ENCODE measurements at regions of chr10 and their contacts with region 1.

Region 1: DNA sequence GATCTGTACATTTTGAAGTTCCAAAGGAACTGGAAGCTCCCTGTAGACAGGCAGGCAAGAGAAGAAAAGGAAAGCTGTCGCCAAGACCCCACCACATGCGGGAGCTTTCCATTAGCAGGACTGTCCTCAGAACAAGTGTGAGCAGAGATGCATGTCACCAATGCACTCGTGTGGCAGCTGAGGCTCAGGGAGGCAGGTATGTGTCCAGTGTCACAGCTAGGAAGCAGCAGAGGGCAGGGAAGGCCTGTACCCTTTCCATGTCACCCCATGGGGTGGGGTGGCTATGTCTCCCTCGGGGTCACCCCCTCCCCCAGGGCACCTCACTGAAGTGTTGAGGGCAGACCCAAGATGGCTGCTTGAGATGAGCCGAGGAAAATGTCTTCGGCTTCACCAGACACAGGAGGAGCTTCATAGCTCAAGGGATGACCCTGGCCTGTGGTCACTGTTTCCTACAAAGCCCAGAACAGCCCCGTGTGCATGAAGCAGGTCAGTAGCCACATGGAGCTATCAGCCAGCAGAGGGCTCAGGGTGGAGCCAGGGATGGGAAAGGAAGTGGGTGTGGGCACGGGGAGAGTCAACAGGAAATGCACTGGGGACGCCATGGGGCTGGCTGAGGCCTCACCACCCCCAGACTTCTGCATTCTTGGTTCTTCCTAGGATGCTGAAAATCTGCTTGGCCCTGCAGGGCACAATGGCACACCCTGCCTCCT is 96.6 kb downstream of the FAM53B start:
- DNase-seq: no peak
- H3K4me3 ChIP-seq: no peak overlapping the region
- H3K27ac ChIP-seq: peak overlapping the region; percentile 3 to 28
- H3K4me1 ChIP-seq: peaks cover 5% of the 10 kb centered on the region
- H3K27me3 ChIP-seq: no peaks in the 10 kb centered on the region
- CTCF ChIP-seq: no peak
- POLR2A ChIP-seq: no peak

Region 2: DNA sequence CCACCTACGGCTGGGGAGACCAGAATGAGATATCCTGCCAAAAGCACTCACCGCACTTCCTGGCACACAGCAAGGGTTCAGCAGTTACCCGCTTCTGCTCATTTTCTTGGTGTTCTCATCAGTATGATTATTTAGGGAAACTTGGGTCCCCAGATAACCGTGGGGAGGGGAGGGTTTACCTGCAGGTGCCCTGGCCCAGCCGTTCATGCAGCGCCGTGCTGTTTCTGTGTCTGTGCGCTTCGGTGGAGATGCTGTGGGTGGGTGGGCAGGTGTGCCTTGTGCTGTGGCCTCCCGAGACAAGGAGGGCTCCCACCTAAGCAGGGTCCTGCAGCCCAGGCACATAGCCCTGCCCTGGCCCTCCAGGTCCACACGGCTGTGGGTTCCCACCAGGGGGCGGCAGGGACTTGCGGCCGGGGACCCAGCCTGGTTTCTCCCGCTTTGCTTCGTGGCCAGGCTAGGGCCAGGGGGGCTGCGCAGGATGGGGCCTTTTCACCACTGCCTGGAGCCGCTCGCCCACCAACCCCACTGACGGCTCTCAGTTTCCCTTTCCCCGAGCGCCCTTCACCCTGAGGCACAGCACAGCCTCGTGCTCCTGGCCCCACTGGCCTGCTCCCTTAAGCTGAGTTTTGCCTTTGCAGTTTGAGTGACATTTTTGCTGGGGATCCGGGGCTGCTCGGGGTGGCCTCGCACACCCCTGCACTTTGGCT is 107.5 kb before region 1 on chr10:
- intact Hi-C with region 1: loop called (anchors 5 kb)
- DNase-seq: peak; percentile 46
- H3K4me3 ChIP-seq: no peak overlapping the region
- H3K27ac ChIP-seq: no peak overlapping the region
- H3K4me1 ChIP-seq: no peaks in the 10 kb centered on the region
- H3K27me3 ChIP-seq: no peaks in the 10 kb centered on the region
- CTCF ChIP-seq: peak; percentile 50 to 91 (median 80)
- POLR2A ChIP-seq: no peak

Measured in prostate gland (tissue), 2 donors.